Activated CD8-positive, alpha-beta T cell treated with anti-CD3 and anti-CD28 coated beads for 36 hours (primary cell): ENCODE measurements at regions of chr14 and their contacts with region 1.

Region 1: DNA sequence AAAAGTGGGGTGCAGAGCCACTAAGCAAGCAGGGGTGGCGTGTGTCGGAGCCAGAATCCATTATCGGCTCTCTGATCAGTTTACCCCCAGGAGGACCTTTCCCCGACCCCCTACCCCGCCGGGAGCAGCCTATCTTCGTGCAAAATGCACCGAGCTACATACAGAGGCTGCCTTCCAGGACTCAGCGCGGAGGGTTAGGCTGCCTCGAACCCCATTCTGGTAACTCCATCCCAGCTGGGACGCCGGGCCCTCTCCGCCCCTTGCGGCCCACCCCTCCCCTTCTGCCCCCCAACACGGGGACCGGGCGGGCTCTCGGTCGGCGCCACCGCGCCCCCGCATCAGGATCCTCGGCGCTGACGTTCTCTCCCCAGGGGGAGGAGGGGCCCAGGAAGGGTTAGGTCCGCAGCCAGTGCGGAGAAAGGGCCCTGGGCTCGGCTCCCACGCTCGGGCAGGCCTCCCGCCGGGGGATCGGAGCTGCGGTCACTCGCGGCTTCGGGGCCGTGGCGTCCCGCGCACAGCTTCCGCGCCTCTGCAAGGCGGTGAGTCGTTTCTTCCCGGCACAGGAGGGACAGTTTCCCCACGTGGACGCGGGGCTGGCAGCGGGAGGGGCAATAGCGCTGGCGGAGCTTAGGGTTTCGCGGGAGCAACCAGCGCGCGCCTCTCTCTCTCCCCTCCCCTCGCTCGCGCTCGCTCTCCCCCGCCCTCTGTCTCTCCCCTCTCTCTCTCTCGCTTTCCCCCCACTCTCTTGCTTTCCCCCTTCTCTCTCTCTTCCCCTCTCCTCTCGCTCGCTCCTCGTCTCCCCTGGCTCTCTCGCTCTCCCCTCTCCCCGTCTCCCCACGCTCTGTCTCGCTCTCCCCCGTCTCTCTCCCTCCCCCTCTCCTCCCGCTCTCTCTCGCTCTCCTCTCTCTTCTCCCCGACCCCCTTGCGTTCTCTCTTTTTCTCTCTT is 12.5 kb upstream of the MAP3K9 start:
- DNase-seq: peak; percentile 66
- ATAC-seq: peak; percentile 53
- H3K4me3 Mint-ChIP-seq: peak overlapping the region; percentile 73
- H3K27ac Mint-ChIP-seq: peak overlapping the region; percentile 46
- H3K4me1 Mint-ChIP-seq: peaks cover 15% of the 10 kb centered on the region
- H3K27me3 Mint-ChIP-seq: peaks cover 30% of the 10 kb centered on the region
- CTCF ChIP-seq: no peak

Region 2: DNA sequence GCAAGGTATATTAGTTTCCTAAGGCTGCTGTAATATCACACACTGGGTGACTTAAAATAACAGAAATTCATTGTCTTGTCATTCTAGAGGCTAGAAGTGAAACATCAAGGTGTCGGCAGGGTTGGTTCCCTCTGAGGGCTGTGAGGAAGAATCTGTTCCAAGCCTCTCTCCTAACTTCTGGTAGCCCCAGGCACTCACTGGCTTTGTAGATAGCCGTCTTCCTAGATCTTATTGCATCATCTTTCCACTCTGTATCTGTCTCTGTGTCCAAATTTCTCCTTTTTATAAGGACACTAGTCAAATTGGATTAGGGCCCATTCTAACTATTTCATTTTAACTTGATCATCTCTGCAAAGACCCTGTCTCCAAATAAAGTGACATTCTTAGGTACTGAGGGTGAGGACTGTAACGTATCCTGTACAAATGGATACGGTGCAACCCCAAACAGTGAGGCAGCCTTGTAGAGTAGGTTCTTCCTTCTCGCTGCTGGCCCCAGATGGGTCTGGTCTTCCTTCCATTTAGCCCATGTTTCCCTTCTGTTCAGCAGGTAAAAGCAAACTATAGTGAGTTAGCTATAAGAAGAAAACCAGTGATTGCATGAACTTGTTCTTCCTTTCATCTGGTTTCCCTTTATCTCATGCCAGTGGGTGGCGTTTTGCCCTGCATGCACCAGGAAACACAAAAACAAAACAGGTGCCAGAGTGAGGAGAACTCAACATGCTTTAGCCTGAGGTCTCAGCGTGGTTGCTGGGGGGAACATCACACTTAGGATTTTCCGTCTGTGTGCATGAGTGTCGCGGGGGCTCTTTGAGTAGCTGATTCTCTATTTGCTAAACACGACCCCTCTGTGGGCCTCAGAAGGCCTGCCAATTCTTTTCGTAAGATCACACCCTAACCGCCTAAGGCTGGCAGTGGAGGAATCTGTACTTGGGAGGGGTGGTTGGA is 160.6 kb before region 1 on chr14:
- CTCF ChIA-PET with region 1: interaction called, 13 read pairs
- POLR2A ChIA-PET with region 1: no interaction called
- intact Hi-C with region 1: no loop called
- DNase-seq: peak; percentile 70
- ATAC-seq: peak; percentile 69
- H3K4me3 Mint-ChIP-seq: peak overlapping the region; percentile 59
- H3K27ac Mint-ChIP-seq: peak overlapping the region; percentile 98
- H3K4me1 Mint-ChIP-seq: peaks cover 94% of the 10 kb centered on the region
- H3K27me3 Mint-ChIP-seq: no peaks in the 10 kb centered on the region
- CTCF ChIP-seq: no peak

Region 3: DNA sequence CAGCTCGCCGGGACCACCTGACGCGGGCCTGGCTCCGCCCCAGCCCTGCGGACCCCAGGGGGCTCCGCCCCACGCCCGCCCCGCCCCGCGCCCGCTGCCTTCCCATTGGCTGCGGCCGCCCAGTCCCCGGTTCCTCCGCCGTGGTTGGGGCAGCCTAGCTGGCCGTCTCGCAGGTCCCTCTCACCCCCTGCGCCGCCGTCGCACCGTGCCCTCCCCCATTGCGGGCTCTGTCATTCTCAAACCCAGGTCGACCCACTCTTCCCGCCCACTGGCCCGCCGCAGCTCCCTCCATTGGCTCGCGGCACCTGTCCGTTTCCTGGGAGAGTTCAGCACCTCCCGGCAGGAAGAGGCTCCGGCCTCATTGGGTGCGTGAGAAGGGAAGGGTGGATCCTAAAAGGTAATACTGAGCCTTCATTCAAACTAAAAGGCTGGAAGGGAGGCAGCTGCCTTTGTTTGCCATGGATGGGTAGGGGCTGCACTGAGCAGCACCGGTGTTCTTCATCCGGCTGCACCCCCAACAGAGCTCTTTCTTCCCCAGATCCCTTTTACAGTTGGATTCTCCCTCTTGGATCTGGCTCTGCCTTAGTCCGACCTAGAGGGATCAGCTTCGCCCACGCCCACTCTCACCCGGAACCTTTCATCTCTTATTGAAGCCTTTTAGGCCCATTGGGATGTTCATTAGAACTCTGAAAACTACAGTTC is 12.2 kb before region 1 on chr14:
- CTCF ChIA-PET with region 1: interaction called, 40 read pairs
- POLR2A ChIA-PET with region 1: interaction called, 14 read pairs
- intact Hi-C with region 1: no loop called
- DNase-seq: peak; percentile 97
- ATAC-seq: peak; percentile 88
- H3K4me3 Mint-ChIP-seq: no peak overlapping the region
- H3K27ac Mint-ChIP-seq: peak overlapping the region; percentile 87
- H3K4me1 Mint-ChIP-seq: peaks cover 14% of the 10 kb centered on the region
- H3K27me3 Mint-ChIP-seq: no peaks in the 10 kb centered on the region
- CTCF ChIP-seq: no peak

Region 4: DNA sequence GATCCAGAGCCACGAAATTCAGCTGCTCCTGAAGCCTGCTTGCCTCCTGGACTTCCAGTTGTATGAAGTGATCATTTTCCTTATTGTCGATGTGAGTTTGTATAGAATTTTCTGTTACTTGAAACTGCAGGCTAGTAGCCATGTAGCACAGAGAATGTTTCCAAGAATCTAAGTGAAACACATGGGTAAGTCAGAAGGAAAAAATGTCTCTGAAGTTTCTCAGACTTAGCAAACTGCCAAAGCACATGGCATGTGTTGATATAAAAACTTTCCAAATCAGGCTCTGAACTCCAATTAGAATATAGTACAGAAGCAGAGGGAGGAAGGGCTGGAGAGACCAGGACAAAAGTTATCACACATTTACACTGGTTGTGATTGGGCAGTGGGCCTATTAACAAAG is 75.6 kb after region 1 on chr14:
- CTCF ChIA-PET with region 1: interaction called, 15 read pairs
- POLR2A ChIA-PET with region 1: no interaction called
- intact Hi-C with region 1: no loop called
- DNase-seq: no peak
- ATAC-seq: no peak
- H3K4me3 Mint-ChIP-seq: no peak overlapping the region
- H3K27ac Mint-ChIP-seq: no peak overlapping the region
- H3K4me1 Mint-ChIP-seq: peaks cover 52% of the 10 kb centered on the region
- H3K27me3 Mint-ChIP-seq: peaks cover 1% of the 10 kb centered on the region
- CTCF ChIP-seq: no peak

Region 5: GRCh38 chr14:70955543-70956480 is 134.0 kb after region 1 on chr14:
- CTCF ChIA-PET with region 1: interaction called, 72 read pairs
- POLR2A ChIA-PET with region 1: interaction called, 3 read pairs
- intact Hi-C with region 1: no loop called
- DNase-seq: peak; percentile 58
- ATAC-seq: peak; percentile 80
- H3K4me3 Mint-ChIP-seq: no peak overlapping the region
- H3K27ac Mint-ChIP-seq: no peak overlapping the region
- H3K4me1 Mint-ChIP-seq: peaks cover 37% of the 10 kb centered on the region
- H3K27me3 Mint-ChIP-seq: no peaks in the 10 kb centered on the region
- CTCF ChIP-seq: peak; percentile 78

Region 6: GRCh38 chr14:70972107-70972976 is 150.5 kb after region 1 on chr14:
- CTCF ChIA-PET with region 1: interaction called, 32 read pairs
- POLR2A ChIA-PET with region 1: interaction called, 4 read pairs
- intact Hi-C with region 1: loop called (anchors 5 kb)
- DNase-seq: peak; percentile 94
- ATAC-seq: peak; percentile 78
- H3K4me3 Mint-ChIP-seq: no peak overlapping the region
- H3K27ac Mint-ChIP-seq: peak overlapping the region; percentile 57
- H3K4me1 Mint-ChIP-seq: peaks cover 40% of the 10 kb centered on the region
- H3K27me3 Mint-ChIP-seq: no peaks in the 10 kb centered on the region
- CTCF ChIP-seq: peak; percentile 83